CD8-positive, alpha-beta T cell (primary cell): ENCODE measurements at regions of chr10 and their contacts with region 1.

Region 1: DNA sequence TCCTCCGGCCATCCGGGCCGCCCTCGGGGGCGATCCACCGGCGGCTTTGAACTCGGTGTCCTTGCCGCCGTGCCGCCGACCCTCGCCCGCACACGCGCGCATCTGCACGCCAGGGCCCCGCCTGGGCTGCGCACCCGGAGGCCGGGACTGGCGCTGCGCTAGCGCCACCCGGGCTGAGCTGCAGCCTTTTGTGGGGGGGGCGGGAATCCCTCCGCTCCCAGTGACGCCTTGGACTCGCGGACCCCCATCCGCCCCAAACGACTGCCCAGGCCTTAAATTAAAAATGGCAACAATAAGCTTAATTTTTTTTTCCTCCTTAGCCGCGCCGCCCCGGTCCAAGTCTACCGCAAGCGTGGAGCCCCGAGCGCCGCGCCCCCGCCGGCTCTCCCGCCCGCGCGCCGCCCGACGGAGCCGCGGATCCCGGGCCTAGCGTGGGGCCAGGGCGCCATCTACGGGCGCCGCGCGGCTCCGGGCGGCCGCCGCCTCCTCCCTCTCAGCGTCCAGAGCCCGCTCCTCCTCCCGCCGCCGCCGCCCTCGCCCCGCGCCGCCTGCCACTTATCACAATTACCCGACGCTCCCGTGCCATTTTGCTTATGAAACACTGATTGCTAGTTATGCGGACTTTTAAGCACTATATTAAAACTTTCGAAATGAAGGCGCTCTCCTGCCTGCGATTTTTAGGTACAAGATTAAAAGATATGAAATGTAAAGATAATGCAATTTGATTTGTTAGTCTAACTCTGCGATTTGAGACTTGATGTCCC is 7.5 kb upstream of the EBF3 start:
- DNase-seq: peak in 2 of 9 experiments; percentile 46 to 59
- ATAC-seq: peak; percentile 48
- H3K4me3 ChIP-seq: no peak overlapping the region
- H3K4me3 Mint-ChIP-seq: peak overlapping the region; percentile 70
- H3K27ac ChIP-seq: no peak overlapping the region
- H3K27ac Mint-ChIP-seq: no peak overlapping the region
- H3K4me1 ChIP-seq: peaks cover 8% of the 10 kb centered on the region
- H3K4me1 Mint-ChIP-seq: peaks cover 13% of the 10 kb centered on the region
- H3K27me3 ChIP-seq: peaks cover 24 to 54% of the 10 kb centered on the region in 2 experiments
- H3K27me3 Mint-ChIP-seq: peaks cover 52% of the 10 kb centered on the region
- CTCF ChIP-seq: no peak

Region 2: DNA sequence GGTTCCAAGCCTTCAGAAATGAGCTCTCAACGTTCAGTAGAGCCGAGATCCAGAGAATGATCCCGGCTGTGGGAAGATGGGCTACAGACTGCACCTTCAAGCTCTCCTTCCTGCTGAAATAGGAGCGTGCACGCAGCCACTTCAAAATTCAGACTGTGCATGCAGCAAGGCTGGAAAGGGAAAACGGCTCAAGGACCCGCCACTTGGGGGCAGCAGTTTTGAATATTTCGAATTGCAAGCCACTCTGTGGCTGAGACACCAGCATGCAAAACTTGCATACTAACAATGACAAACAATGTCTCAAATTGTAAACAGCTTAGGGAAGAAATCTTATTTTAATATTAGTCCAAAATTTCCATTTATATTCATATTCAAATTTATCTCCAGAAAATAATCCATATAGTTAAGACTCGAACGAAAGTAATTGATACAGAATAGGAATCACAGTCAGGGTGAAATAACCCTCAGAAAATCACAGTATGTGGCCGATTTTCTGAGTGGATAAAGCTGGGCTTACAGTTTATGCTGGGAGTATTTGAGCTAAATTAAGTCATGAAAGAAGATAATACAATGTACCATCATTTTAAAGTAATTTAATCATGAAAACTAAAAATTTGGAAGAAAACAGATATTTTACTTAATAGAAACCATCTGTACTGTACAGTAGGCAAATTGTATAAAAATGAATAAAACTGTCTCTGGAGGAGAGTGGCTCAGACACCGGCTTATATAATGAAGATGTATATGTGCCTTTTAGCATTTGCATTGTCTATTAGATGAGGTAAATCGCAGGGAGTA is 1707.5 kb before region 1 on chr10:
- CTCF ChIA-PET with region 1: interaction called, 5 read pairs
- POLR2A ChIA-PET with region 1: no interaction called
- intact Hi-C with region 1: loop called in 1 of 2 experiments (anchors 5 kb)
- DNase-seq: peak in 8 of 9 experiments; percentile 15 to 59 (median 42)
- ATAC-seq: no peak
- H3K4me3 ChIP-seq: no peak overlapping the region
- H3K4me3 Mint-ChIP-seq: no peak overlapping the region
- H3K27ac ChIP-seq: no peak overlapping the region
- H3K27ac Mint-ChIP-seq: no peak overlapping the region
- H3K4me1 ChIP-seq: no peaks in the 10 kb centered on the region
- H3K4me1 Mint-ChIP-seq: no peaks in the 10 kb centered on the region
- H3K27me3 ChIP-seq: peaks cover 0 to 2% of the 10 kb centered on the region in 2 experiments
- H3K27me3 Mint-ChIP-seq: peaks cover 46% of the 10 kb centered on the region
- CTCF ChIP-seq: peak; percentile 48

Region 3: DNA sequence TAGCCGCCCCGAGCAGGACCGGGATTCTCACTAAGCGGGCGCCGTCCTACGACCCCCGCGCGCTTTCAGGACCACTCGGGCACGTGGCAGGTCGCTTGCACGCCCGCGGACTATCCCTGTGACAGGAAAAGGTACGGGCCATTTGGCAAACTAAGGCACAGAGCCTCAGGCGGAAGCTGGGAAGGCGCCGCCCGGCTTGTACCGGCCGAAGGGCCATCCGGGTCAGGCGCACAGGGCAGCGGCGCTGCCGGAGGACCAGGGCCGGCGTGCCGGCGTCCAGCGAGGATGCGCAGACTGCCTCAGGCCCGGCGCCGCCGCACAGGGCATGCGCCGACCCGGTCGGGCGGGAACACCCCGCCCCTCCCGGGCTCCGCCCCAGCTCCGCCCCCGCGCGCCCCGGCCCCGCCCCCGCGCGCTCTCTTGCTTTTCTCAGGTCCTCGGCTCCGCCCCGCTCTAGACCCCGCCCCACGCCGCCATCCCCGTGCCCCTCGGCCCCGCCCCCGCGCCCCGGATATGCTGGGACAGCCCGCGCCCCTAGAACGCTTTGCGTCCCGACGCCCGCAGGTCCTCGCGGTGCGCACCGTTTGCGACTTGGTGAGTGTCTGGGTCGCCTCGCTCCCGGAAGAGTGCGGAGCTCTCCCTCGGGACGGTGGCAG is 504.7 kb before region 1 on chr10 and contains the start of gene MGMT:
- CTCF ChIA-PET with region 1: no interaction called
- POLR2A ChIA-PET with region 1: no interaction called
- intact Hi-C with region 1: loop called in 1 of 2 experiments (anchors 5 kb)
- DNase-seq: peak; percentile 96 to 99 (median 98)
- ATAC-seq: peak; percentile 98
- H3K4me3 ChIP-seq: peak within 1 kb of the TSS; percentile 83 to 89
- H3K4me3 Mint-ChIP-seq: peak within 1 kb of the TSS; percentile 85
- H3K27ac ChIP-seq: peak within 1 kb of the TSS; percentile 63 to 78
- H3K27ac Mint-ChIP-seq: peak within 1 kb of the TSS; percentile 86
- H3K4me1 ChIP-seq: peaks cover 17% of the 10 kb centered on the region
- H3K4me1 Mint-ChIP-seq: peaks cover 27% of the 10 kb centered on the region
- H3K27me3 ChIP-seq: no peaks in the 10 kb centered on the region
- H3K27me3 Mint-ChIP-seq: no peaks in the 10 kb centered on the region
- CTCF ChIP-seq: no peak
- total RNA-seq, gene MGMT: 6.4 to 7.0 TPM

Region 4: GRCh38 chr10:129551767-129552518 is 419.6 kb before region 1 on chr10:
- CTCF ChIA-PET with region 1: no interaction called
- POLR2A ChIA-PET with region 1: no interaction called
- intact Hi-C with region 1: no loop called
- DNase-seq: peak in 1 of 9 experiments; percentile 7
- ATAC-seq: no peak
- H3K4me3 ChIP-seq: no peak overlapping the region
- H3K4me3 Mint-ChIP-seq: no peak overlapping the region
- H3K27ac ChIP-seq: no peak overlapping the region
- H3K27ac Mint-ChIP-seq: no peak overlapping the region
- H3K4me1 ChIP-seq: no peaks in the 10 kb centered on the region
- H3K4me1 Mint-ChIP-seq: no peaks in the 10 kb centered on the region
- H3K27me3 ChIP-seq: no peaks in the 10 kb centered on the region
- H3K27me3 Mint-ChIP-seq: no peaks in the 10 kb centered on the region
- CTCF ChIP-seq: no peak

Region 5: GRCh38 chr10:130022511-130023299 is 51.1 kb after region 1 on chr10:
- CTCF ChIA-PET with region 1: no interaction called
- POLR2A ChIA-PET with region 1: no interaction called
- intact Hi-C with region 1: no loop called
- DNase-seq: no peak
- ATAC-seq: no peak
- H3K4me3 ChIP-seq: no peak overlapping the region
- H3K4me3 Mint-ChIP-seq: no peak overlapping the region
- H3K27ac ChIP-seq: no peak overlapping the region
- H3K27ac Mint-ChIP-seq: no peak overlapping the region
- H3K4me1 ChIP-seq: no peaks in the 10 kb centered on the region
- H3K4me1 Mint-ChIP-seq: no peaks in the 10 kb centered on the region
- H3K27me3 ChIP-seq: no peaks in the 10 kb centered on the region
- H3K27me3 Mint-ChIP-seq: no peaks in the 10 kb centered on the region
- CTCF ChIP-seq: no peak